HEK293 (cell line): ENCODE measurements at regions of chr17 and their contacts with region 1.

Region 1: GRCh38 chr17:41579484-41580243 is 7.0 kb downstream of the KRT14 start:
- H3K4me3 ChIP-seq: no peak overlapping the region
- H3K27ac ChIP-seq: no peak overlapping the region
- H3K4me1 ChIP-seq: no peaks in the 10 kb centered on the region; the same call in 1 of the 2 replicates
- CTCF ChIP-seq: peak; percentile 89

Region 2: GRCh38 chr17:41178341-41178740 is 401.3 kb before region 1 on chr17:
- CTCF ChIA-PET with region 1: no interaction called
- POLR2A ChIA-PET with region 1: no interaction called
- H3K4me3 ChIP-seq: no peak overlapping the region
- H3K27ac ChIP-seq: no peak overlapping the region
- H3K4me1 ChIP-seq: no peaks in the 10 kb centered on the region
- CTCF ChIP-seq: no peak

Region 3: GRCh38 chr17:41559548-41559947 is 20.1 kb before region 1 on chr17:
- CTCF ChIA-PET with region 1: interaction called, 11 read pairs
- POLR2A ChIA-PET with region 1: no interaction called
- H3K4me3 ChIP-seq: no peak overlapping the region
- H3K27ac ChIP-seq: no peak overlapping the region
- H3K4me1 ChIP-seq: no peaks in the 10 kb centered on the region
- CTCF ChIP-seq: no peak

Region 4: GRCh38 chr17:41567317-41567716 is 12.3 kb before region 1 on chr17:
- CTCF ChIA-PET with region 1: interaction called, 14 read pairs
- POLR2A ChIA-PET with region 1: interaction called, 6 read pairs
- H3K4me3 ChIP-seq: no peak overlapping the region
- H3K27ac ChIP-seq: no peak overlapping the region
- H3K4me1 ChIP-seq: no peaks in the 10 kb centered on the region
- CTCF ChIP-seq: no peak

Region 5: GRCh38 chr17:41602524-41602923 is 22.9 kb after region 1 on chr17:
- CTCF ChIA-PET with region 1: interaction called, 10 read pairs
- POLR2A ChIA-PET with region 1: no interaction called
- H3K4me3 ChIP-seq: no peak overlapping the region
- H3K27ac ChIP-seq: no peak overlapping the region
- H3K4me1 ChIP-seq: peaks cover 3% of the 10 kb centered on the region
- CTCF ChIP-seq: no peak